ENCODE measurements at regions of chr7 and their contacts with region 1.

Region 1: GRCh38 chr7:104923010-104923421 is 91.0 kb upstream of the KMT2E start:
- DNase-seq: peak; percentile 90
- H3K4me3 Mint-ChIP-seq: no peak overlapping the region
- H3K27ac Mint-ChIP-seq: peak overlapping the region; percentile 61
- H3K4me1 Mint-ChIP-seq: peaks cover 4% of the 10 kb centered on the region
- H3K27me3 Mint-ChIP-seq: no peaks in the 10 kb centered on the region

Region 2: GRCh38 chr7:104272767-104273384 is 650.1 kb before region 1 on chr7:
- CTCF ChIA-PET with region 1: interaction called, 3 read pairs
- intact Hi-C with region 1: loop called (anchors 1 kb)
- DNase-seq: peak; percentile 18
- H3K4me3 Mint-ChIP-seq: no peak overlapping the region
- H3K27ac Mint-ChIP-seq: no peak overlapping the region
- H3K4me1 Mint-ChIP-seq: no peaks in the 10 kb centered on the region
- H3K27me3 Mint-ChIP-seq: peaks cover 28% of the 10 kb centered on the region

Region 3: GRCh38 chr7:104878577-104878976 is 44.4 kb before region 1 on chr7:
- CTCF ChIA-PET with region 1: interaction called, 123 read pairs
- intact Hi-C with region 1: loop called (anchors 1 kb)
- DNase-seq: peak; percentile 18
- H3K4me3 Mint-ChIP-seq: no peak overlapping the region
- H3K27ac Mint-ChIP-seq: no peak overlapping the region
- H3K4me1 Mint-ChIP-seq: peaks cover 15% of the 10 kb centered on the region
- H3K27me3 Mint-ChIP-seq: no peaks in the 10 kb centered on the region

Region 4: GRCh38 chr7:104973227-104973626 is 50.2 kb after region 1 on chr7:
- CTCF ChIA-PET with region 1: no interaction called
- intact Hi-C with region 1: no loop called
- DNase-seq: no peak
- H3K4me3 Mint-ChIP-seq: no peak overlapping the region
- H3K27ac Mint-ChIP-seq: no peak overlapping the region
- H3K4me1 Mint-ChIP-seq: peaks cover 13% of the 10 kb centered on the region
- H3K27me3 Mint-ChIP-seq: no peaks in the 10 kb centered on the region

Region 5: GRCh38 chr7:104983578-104984539 is 60.8 kb after region 1 on chr7:
- CTCF ChIA-PET with region 1: interaction called, 28 read pairs
- intact Hi-C with region 1: loop called (anchors 1 kb)
- DNase-seq: peak; percentile 89
- H3K4me3 Mint-ChIP-seq: peak overlapping the region; percentile 98
- H3K27ac Mint-ChIP-seq: peak overlapping the region; percentile 100
- H3K4me1 Mint-ChIP-seq: peaks cover 65% of the 10 kb centered on the region
- H3K27me3 Mint-ChIP-seq: no peaks in the 10 kb centered on the region

Region 6: GRCh38 chr7:105136221-105136620 is 213.2 kb after region 1 on chr7:
- CTCF ChIA-PET with region 1: interaction called, 3 read pairs
- intact Hi-C with region 1: loop called (anchors 5 kb)
- DNase-seq: no peak
- H3K4me3 Mint-ChIP-seq: no peak overlapping the region
- H3K27ac Mint-ChIP-seq: no peak overlapping the region
- H3K4me1 Mint-ChIP-seq: peaks cover 5% of the 10 kb centered on the region
- H3K27me3 Mint-ChIP-seq: no peaks in the 10 kb centered on the region

Region 7: DNA sequence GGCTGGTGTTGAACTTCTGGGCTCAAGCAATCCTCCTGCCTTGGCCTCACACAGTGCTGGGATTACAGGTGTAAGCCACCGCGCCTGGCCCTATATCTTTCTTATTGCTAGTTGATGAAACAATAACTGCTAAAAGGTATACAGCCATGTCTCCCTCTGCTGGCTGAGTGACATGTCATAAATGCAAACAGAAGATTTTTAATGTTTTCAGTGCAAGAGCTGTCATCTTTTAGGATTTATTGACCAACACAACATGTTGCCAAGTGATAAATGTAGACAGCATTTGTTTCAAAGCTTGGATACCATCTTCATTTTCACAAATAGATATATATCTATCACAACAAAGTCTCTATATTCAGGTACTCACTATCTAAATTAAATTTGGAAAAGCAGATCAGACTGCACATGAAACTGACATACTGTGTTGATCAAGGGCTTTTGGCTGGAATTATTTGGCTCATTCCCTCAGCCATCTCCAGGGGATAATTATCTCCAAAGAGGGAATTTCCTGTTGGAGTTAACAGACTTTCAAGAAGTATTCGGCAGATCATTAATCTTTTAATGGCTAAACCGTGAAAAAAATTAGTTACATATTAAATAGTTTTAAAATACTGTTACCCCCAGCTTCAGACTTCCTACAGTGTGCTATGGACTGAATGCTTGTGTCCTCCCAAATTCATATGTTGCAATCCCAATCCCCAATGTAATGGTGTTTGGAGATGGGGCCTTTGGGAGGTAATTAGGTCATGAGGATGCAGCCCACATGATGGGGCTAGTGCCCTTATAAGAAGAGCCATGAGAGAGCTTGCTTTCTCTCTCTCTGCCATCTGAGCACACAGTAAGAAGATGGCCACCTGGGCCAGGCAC is 507.0 kb after region 1 on chr7:
- CTCF ChIA-PET with region 1: no interaction called
- intact Hi-C with region 1: loop called (anchors 1 kb)
- DNase-seq: peak; percentile 80
- H3K4me3 Mint-ChIP-seq: no peak overlapping the region
- H3K27ac Mint-ChIP-seq: no peak overlapping the region
- H3K4me1 Mint-ChIP-seq: peaks cover 15% of the 10 kb centered on the region
- H3K27me3 Mint-ChIP-seq: no peaks in the 10 kb centered on the region

Region 8: GRCh38 chr7:105589356-105590077 is 666.5 kb after region 1 on chr7:
- CTCF ChIA-PET with region 1: no interaction called
- intact Hi-C with region 1: loop called (anchors 1 kb)
- DNase-seq: peak; percentile 82
- H3K4me3 Mint-ChIP-seq: no peak overlapping the region
- H3K27ac Mint-ChIP-seq: no peak overlapping the region
- H3K4me1 Mint-ChIP-seq: peaks cover 4% of the 10 kb centered on the region
- H3K27me3 Mint-ChIP-seq: no peaks in the 10 kb centered on the region

Measured in activated naive CD4-positive, alpha-beta T cell treated with anti-CD3 and anti-CD28 coated beads for 36 hours (primary cell).